Caco-2 (cell line): ENCODE measurements at regions of chr12 and their contacts with region 1.

Region 1: GRCh38 chr12:71551529-71551928 is 111.9 kb downstream of the LGR5 start:
- DNase-seq: no peak
- H3K4me3 ChIP-seq: no peak overlapping the region
- H3K4me3 Mint-ChIP-seq: no peak overlapping the region
- H3K27ac Mint-ChIP-seq: no peak overlapping the region
- H3K4me1 ChIP-seq: no peaks in the 10 kb centered on the region
- H3K4me1 Mint-ChIP-seq: peaks cover 7% of the 10 kb centered on the region
- H3K27me3 ChIP-seq: no peaks in the 10 kb centered on the region
- H3K27me3 Mint-ChIP-seq: no peaks in the 10 kb centered on the region
- CTCF ChIP-seq: peak; percentile 48 to 54

Region 2: DNA sequence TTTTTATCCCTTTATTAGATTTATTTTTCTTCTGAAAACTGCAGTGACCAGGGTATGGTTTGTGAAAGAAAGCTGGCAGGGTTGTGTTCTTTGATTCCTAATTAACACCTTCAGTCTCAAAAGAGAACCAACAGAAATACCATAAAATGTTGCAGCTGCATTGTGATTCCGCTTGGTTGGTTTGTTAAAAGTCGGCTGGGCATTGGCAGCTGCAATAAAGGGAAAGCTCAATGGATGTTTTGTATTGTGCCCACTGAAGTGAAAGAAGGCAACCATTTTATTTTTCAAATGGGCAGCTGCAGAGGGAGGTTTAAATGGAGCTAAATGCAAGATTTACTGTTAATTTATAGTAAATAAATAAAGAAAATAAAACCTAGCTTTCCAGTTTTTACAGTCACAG is 95.2 kb before region 1 on chr12:
- CTCF ChIA-PET with region 1: no interaction called
- POLR2A ChIA-PET with region 1: no interaction called
- intact Hi-C with region 1: loop called (anchors 5 kb)
- DNase-seq: no peak
- H3K4me3 ChIP-seq: no peak overlapping the region
- H3K4me3 Mint-ChIP-seq: no peak overlapping the region
- H3K27ac Mint-ChIP-seq: no peak overlapping the region
- H3K4me1 ChIP-seq: peaks cover 20% of the 10 kb centered on the region
- H3K4me1 Mint-ChIP-seq: no peaks in the 10 kb centered on the region
- H3K27me3 ChIP-seq: no peaks in the 10 kb centered on the region
- H3K27me3 Mint-ChIP-seq: no peaks in the 10 kb centered on the region
- CTCF ChIP-seq: no peak

Region 3: GRCh38 chr12:71503579-71504391 is 47.7 kb before region 1 on chr12:
- CTCF ChIA-PET with region 1: no interaction called
- POLR2A ChIA-PET with region 1: no interaction called
- intact Hi-C with region 1: no loop called
- DNase-seq: no peak
- H3K4me3 ChIP-seq: no peak overlapping the region
- H3K4me3 Mint-ChIP-seq: no peak overlapping the region
- H3K27ac Mint-ChIP-seq: no peak overlapping the region
- H3K4me1 ChIP-seq: no peaks in the 10 kb centered on the region
- H3K4me1 Mint-ChIP-seq: no peaks in the 10 kb centered on the region
- H3K27me3 ChIP-seq: no peaks in the 10 kb centered on the region
- H3K27me3 Mint-ChIP-seq: no peaks in the 10 kb centered on the region
- CTCF ChIP-seq: no peak